ENCODE measurements at regions of chr2 and their contacts with region 1.

Region 1: GRCh38 chr2:176537932-176538331 is 268.7 kb downstream of the MTX2 start:
- DNase-seq: no peak
- H3K4me3 ChIP-seq: no peak overlapping the region
- H3K4me3 Mint-ChIP-seq: no peak overlapping the region
- H3K27ac Mint-ChIP-seq: no peak overlapping the region
- H3K4me1 ChIP-seq: no peaks in the 10 kb centered on the region
- H3K4me1 Mint-ChIP-seq: no peaks in the 10 kb centered on the region
- H3K27me3 ChIP-seq: no peaks in the 10 kb centered on the region; the same call in 1 of the 2 replicates
- H3K27me3 Mint-ChIP-seq: peaks cover 13% of the 10 kb centered on the region
- CTCF ChIP-seq: no peak

Region 2: DNA sequence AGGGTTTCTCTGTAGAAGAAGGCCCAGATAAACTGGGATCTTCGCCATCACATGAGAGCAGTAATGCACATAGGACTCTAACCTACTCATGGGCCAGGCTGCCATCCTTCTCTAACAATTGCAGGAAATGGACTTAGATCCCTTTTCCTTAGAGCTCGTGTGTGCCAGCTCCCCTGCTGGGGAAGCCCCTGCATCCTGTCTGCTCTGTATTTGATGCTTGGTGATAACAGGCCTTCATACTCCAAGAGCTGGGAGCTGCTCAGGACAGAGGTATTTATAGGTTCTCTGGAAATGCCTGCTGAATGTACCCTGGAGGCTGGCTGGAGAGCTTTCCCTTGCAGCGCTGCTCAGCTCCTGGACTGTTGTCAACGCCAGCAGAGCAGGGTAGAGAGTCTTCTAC is 19.1 kb before region 1 on chr2:
- CTCF ChIA-PET with region 1: no interaction called
- POLR2A ChIA-PET with region 1: no interaction called
- intact Hi-C with region 1: no loop called
- DNase-seq: peak in 1 of 2 experiments; percentile 1
- H3K4me3 ChIP-seq: no peak overlapping the region
- H3K4me3 Mint-ChIP-seq: no peak overlapping the region
- H3K27ac Mint-ChIP-seq: no peak overlapping the region
- H3K4me1 ChIP-seq: no peaks in the 10 kb centered on the region
- H3K4me1 Mint-ChIP-seq: no peaks in the 10 kb centered on the region
- H3K27me3 ChIP-seq: no peaks in the 10 kb centered on the region; the same call in 1 of the 2 replicates
- H3K27me3 Mint-ChIP-seq: peaks cover 3% of the 10 kb centered on the region
- CTCF ChIP-seq: no peak

Region 3: GRCh38 chr2:176554101-176555048 is 16.4 kb after region 1 on chr2:
- CTCF ChIA-PET with region 1: no interaction called
- POLR2A ChIA-PET with region 1: interaction called, 10 read pairs
- intact Hi-C with region 1: no loop called
- DNase-seq: peak in 1 of 2 experiments; percentile 43
- H3K4me3 ChIP-seq: no peak overlapping the region
- H3K4me3 Mint-ChIP-seq: peak overlapping the region; percentile 57
- H3K27ac Mint-ChIP-seq: no peak overlapping the region
- H3K4me1 ChIP-seq: 0 out of 2 replicates have a peak, but pooled peaks cover 4% of the 10 kb centered on the region
- H3K4me1 Mint-ChIP-seq: no peaks in the 10 kb centered on the region
- H3K27me3 ChIP-seq: no peaks in the 10 kb centered on the region; the same call in 1 of the 2 replicates
- H3K27me3 Mint-ChIP-seq: peaks cover 9% of the 10 kb centered on the region
- CTCF ChIP-seq: peak; percentile 65 to 78

Region 4: GRCh38 chr2:176710657-176711186 is 172.8 kb after region 1 on chr2:
- CTCF ChIA-PET with region 1: no interaction called
- POLR2A ChIA-PET with region 1: no interaction called
- intact Hi-C with region 1: no loop called
- DNase-seq: no peak
- H3K4me3 ChIP-seq: no peak overlapping the region
- H3K4me3 Mint-ChIP-seq: no peak overlapping the region
- H3K27ac Mint-ChIP-seq: no peak overlapping the region
- H3K4me1 ChIP-seq: no peaks in the 10 kb centered on the region
- H3K4me1 Mint-ChIP-seq: no peaks in the 10 kb centered on the region
- H3K27me3 ChIP-seq: no peaks in the 10 kb centered on the region
- H3K27me3 Mint-ChIP-seq: peaks cover 8% of the 10 kb centered on the region
- CTCF ChIP-seq: no peak

Measured in Caco-2 (cell line).